ENCODE measurements at regions of chr3 and their contacts with region 1.

Region 1: GRCh38 chr3:134449277-134449676 is 36.5 kb downstream of the ANAPC13 start:
- DNase-seq: peak; percentile 56
- ATAC-seq: peak; percentile 92
- H3K4me3 ChIP-seq: no peak overlapping the region
- H3K27ac ChIP-seq: no peak overlapping the region
- H3K4me1 ChIP-seq: peaks cover 11% of the 10 kb centered on the region; the same call in 1 of the 2 replicates
- H3K27me3 ChIP-seq: peaks cover 2 to 8% of the 10 kb centered on the region in 2 experiments; a peak in 3 of 5 replicates
- CTCF ChIP-seq: peak; percentile 72
- EP300 ChIP-seq: no peak
- POLR2A ChIP-seq: no peak
- RAD21 ChIP-seq: peak; percentile 65; the same call in 1 of the 2 replicates

Region 2: DNA sequence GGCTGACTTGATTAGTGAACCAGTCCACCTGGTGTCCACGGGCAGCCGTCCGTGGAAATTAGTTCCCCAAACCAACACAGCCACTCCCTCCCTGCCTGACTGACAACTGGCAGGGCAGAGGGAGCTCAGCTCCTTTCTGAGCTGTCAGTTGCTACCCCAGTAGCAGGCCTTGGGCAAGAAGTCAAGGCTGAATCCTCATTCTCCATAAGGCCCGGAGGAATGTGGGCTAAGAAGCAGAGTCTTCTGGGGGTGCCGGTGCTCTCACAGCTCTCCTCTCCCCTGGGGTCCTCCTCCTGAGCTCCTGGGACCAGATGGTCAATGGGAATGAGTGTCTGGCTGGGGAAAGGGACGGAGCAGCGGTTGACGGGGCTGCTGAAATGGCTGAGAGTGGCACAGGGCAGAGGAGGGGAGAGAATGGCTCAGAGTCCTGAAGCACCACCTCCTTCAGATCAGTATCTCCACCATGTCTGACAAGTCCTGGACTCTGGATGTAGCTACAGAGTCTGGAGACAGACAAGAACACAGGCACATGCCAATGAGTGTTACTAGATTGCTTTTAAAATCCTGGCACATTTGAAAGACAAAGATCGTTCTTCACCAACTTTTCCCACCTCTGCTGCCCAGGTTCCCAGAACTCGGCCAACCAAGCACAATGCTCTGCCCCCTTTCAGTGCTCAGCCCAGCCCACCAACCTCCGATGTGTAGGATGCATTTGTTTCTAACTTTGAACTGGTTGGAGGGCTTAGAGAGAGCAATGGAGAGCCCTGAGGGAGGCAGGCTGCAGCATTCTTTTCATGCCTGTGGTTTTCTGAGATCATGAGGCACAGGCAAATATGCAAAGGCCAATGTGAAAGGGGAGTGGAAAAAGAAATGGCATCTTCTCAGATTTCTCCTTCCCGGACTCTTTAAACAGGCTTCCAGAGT is 91.8 kb before region 1 on chr3:
- CTCF ChIA-PET with region 1: no interaction called
- POLR2A ChIA-PET with region 1: no interaction called
- in situ Hi-C with region 1: no loop called
- intact Hi-C with region 1: loop called (anchors 1 kb)
- DNase-seq: peak; percentile 87
- ATAC-seq: peak; percentile 82
- H3K4me3 ChIP-seq: no peak overlapping the region
- H3K27ac ChIP-seq: peak overlapping the region; percentile 56
- H3K4me1 ChIP-seq: peaks cover 70% of the 10 kb centered on the region
- H3K27me3 ChIP-seq: no peaks in the 10 kb centered on the region
- CTCF ChIP-seq: no peak
- EP300 ChIP-seq: peak in 1 of 2 experiments; percentile 47; a peak in 2 of 4 replicates
- POLR2A ChIP-seq: no peak
- RAD21 ChIP-seq: no peak

Region 3: GRCh38 chr3:134459562-134459961 is 10.3 kb after region 1 on chr3:
- CTCF ChIA-PET with region 1: no interaction called
- POLR2A ChIA-PET with region 1: no interaction called
- in situ Hi-C with region 1: no loop called
- intact Hi-C with region 1: loop called (anchors 1 kb)
- DNase-seq: no peak
- ATAC-seq: no peak
- H3K4me3 ChIP-seq: no peak overlapping the region
- H3K27ac ChIP-seq: no peak overlapping the region
- H3K4me1 ChIP-seq: peaks cover 5% of the 10 kb centered on the region
- H3K27me3 ChIP-seq: peaks cover 0 to 32% of the 10 kb centered on the region in 2 experiments; a peak in 2 of 5 replicates
- CTCF ChIP-seq: no peak
- EP300 ChIP-seq: no peak
- POLR2A ChIP-seq: no peak
- RAD21 ChIP-seq: no peak

Region 4: GRCh38 chr3:134473868-134474546 is 24.7 kb after region 1 on chr3:
- CTCF ChIA-PET with region 1: no interaction called
- POLR2A ChIA-PET with region 1: no interaction called
- in situ Hi-C with region 1: no loop called
- intact Hi-C with region 1: loop called (anchors 1 kb)
- DNase-seq: peak; percentile 80
- ATAC-seq: peak; percentile 90
- H3K4me3 ChIP-seq: no peak overlapping the region
- H3K27ac ChIP-seq: no peak overlapping the region
- H3K4me1 ChIP-seq: peaks cover 29% of the 10 kb centered on the region
- H3K27me3 ChIP-seq: no peaks in the 10 kb centered on the region
- CTCF ChIP-seq: peak; percentile 78
- EP300 ChIP-seq: no peak
- POLR2A ChIP-seq: no peak
- RAD21 ChIP-seq: peak; percentile 63

Region 5: DNA sequence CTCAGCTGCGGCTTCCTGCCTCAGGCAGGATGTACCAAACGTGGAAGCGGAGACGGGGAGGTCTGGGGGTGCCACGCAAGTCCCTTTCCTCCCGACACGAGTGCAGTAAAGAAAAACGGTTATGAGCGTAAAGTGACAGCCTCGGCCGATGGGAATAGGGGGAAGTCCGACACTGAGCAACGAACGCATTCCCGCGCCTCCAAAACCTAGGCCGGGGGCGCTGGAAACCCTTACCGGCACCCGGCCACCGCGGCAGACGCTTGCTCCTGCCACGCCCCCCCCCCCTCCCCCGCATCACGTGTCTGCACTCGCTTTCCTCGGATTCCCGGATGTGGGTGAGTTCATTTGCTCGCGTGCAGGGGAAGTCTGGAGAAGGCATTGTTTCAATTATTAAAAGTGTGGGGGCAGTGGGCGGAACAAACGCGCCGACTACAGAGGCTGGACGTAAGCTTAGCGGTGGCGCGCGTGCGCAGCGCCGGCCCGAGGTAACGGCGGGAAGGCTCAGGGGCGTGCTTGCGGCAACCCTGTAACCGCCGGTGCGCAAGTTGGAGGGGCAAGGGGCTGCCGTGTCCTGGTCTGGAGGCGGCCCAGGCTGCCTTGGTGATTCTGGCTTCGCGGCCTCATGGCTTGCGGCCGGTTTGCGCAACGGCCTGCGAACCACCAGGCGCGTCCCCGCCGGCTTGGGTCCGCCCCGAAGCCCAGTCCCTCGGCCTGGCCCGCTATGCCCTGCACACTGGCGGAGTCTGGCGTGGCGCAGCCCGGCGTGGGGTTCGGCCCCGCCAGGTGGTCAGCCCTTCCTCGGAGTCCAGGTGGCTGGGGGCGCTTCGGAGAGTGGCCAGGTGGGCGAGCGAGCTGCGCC is 36.7 kb after region 1 on chr3 and contains the starts of genes ANAPC13 and CEP63:
- CTCF ChIA-PET with region 1: no interaction called
- POLR2A ChIA-PET with region 1: no interaction called
- in situ Hi-C with region 1: no loop called
- intact Hi-C with region 1: no loop called
- DNase-seq: peak; percentile 97
- ATAC-seq: peak; percentile 89
- H3K4me3 ChIP-seq: peak within 1 kb of the TSS; percentile 86 to 89 (median 88)
- H3K27ac ChIP-seq: peak within 1 kb of the TSS; percentile 95
- H3K4me1 ChIP-seq: peaks cover 29% of the 10 kb centered on the region
- H3K27me3 ChIP-seq: no peaks in the 10 kb centered on the region
- CTCF ChIP-seq: peak; percentile 14; the same call in 1 of the 2 replicates
- EP300 ChIP-seq: peak in 1 of 2 experiments; percentile 33; a peak in 1 of 4 replicates
- POLR2A ChIP-seq: peak; percentile 75 to 88
- RAD21 ChIP-seq: peak; percentile 12; the same call in 1 of the 2 replicates
- total RNA-seq, gene ANAPC13: 69.1 and 95.1 TPM in 2 replicates
- total RNA-seq, gene CEP63: 18.4 and 25.6 TPM in 2 replicates

Region 6: GRCh38 chr3:134707908-134708597 is 258.8 kb after region 1 on chr3:
- CTCF ChIA-PET with region 1: no interaction called
- POLR2A ChIA-PET with region 1: no interaction called
- in situ Hi-C with region 1: no loop called
- intact Hi-C with region 1: no loop called
- DNase-seq: no peak
- ATAC-seq: no peak
- H3K4me3 ChIP-seq: no peak overlapping the region
- H3K27ac ChIP-seq: no peak overlapping the region
- H3K4me1 ChIP-seq: no peaks in the 10 kb centered on the region
- H3K27me3 ChIP-seq: 0 out of 5 replicates have a peak, but pooled peaks cover 0 to 5% of the 10 kb centered on the region in 2 experiments
- CTCF ChIP-seq: no peak
- EP300 ChIP-seq: no peak
- POLR2A ChIP-seq: no peak
- RAD21 ChIP-seq: no peak

Region 7: DNA sequence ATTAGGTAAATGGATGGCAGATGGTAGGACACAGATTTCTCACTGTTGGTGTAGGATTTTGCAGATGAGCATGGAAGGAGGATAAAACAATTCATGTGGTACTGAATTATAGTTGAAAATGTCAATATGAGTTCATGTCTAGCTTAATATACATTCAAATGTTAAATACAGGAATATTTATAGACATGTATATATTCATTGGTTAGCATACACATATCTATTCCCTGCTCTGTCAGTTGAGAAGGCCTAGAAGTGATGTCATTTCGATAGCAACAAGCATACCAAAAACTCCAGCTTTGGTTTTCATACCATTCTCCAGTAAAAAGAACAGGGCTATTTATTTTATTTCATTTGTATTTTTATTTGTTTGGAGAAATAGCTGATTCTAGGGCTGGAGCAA is 842.9 kb after region 1 on chr3:
- CTCF ChIA-PET with region 1: no interaction called
- POLR2A ChIA-PET with region 1: no interaction called
- in situ Hi-C with region 1: no loop called
- intact Hi-C with region 1: no loop called
- DNase-seq: no peak
- ATAC-seq: no peak
- H3K4me3 ChIP-seq: no peak overlapping the region
- H3K27ac ChIP-seq: no peak overlapping the region
- H3K4me1 ChIP-seq: no peaks in the 10 kb centered on the region
- H3K27me3 ChIP-seq: no peaks in the 10 kb centered on the region; a peak in 1 of 5 replicates
- CTCF ChIP-seq: no peak
- EP300 ChIP-seq: no peak
- POLR2A ChIP-seq: no peak
- RAD21 ChIP-seq: no peak

Measured in HepG2 (cell line).